ENCODE measurements at regions of chr12 and their contacts with region 1.

Region 1: GRCh38 chr12:53451661-53452158 is at the start of gene PCBP2:
- DNase-seq: peak; percentile 99
- H3K4me3 Mint-ChIP-seq: peak within 1 kb of the TSS; percentile 94
- H3K27ac Mint-ChIP-seq: peak within 1 kb of the TSS; percentile 98
- H3K4me1 Mint-ChIP-seq: peaks cover 23% of the 10 kb centered on the region
- H3K27me3 Mint-ChIP-seq: no peaks in the 10 kb centered on the region
- total RNA-seq, gene PCBP2: 897 to 926 TPM

Region 2: DNA sequence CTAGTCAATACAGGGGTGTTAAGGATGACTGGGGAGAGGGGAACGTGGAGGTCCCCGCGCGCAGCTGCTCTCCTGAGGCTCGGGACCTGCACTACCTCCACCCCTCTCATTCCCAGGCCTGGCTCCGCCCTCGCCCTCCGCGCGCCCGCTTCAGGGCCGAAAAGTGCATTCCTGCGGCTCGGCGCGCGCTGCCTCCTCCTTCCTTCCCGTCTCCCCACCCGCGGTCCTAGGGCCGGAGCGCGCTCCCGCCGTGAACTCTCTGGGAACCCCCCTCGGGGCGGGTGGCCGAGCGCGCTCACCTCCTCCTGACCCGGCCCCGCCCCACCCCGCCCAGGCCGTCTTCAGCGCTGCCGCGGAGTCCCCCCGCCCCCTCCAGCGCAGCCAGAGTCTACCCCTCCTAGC is 230.9 kb before region 1 on chr12:
- CTCF ChIA-PET with region 1: no interaction called
- POLR2A ChIA-PET with region 1: no interaction called
- intact Hi-C with region 1: loop called (anchors 5 kb)
- DNase-seq: peak; percentile 92
- H3K4me3 Mint-ChIP-seq: peak overlapping the region; percentile 80
- H3K27ac Mint-ChIP-seq: peak overlapping the region; percentile 93
- H3K4me1 Mint-ChIP-seq: peaks cover 74% of the 10 kb centered on the region
- H3K27me3 Mint-ChIP-seq: no peaks in the 10 kb centered on the region

Region 3: GRCh38 chr12:53379389-53380103 is 72.2 kb before region 1 on chr12:
- CTCF ChIA-PET with region 1: no interaction called
- POLR2A ChIA-PET with region 1: no interaction called
- intact Hi-C with region 1: loop called (anchors 2 kb)
- DNase-seq: peak; percentile 99
- H3K4me3 Mint-ChIP-seq: no peak overlapping the region
- H3K27ac Mint-ChIP-seq: no peak overlapping the region
- H3K4me1 Mint-ChIP-seq: peaks cover 36% of the 10 kb centered on the region
- H3K27me3 Mint-ChIP-seq: no peaks in the 10 kb centered on the region

Region 4: GRCh38 chr12:53476769-53477209 is 25.1 kb after region 1 on chr12:
- CTCF ChIA-PET with region 1: interaction called, 4 read pairs
- POLR2A ChIA-PET with region 1: interaction called, 53 read pairs
- intact Hi-C with region 1: loop called (anchors 2 kb)
- DNase-seq: no peak
- H3K4me3 Mint-ChIP-seq: no peak overlapping the region
- H3K27ac Mint-ChIP-seq: peak overlapping the region; percentile 94
- H3K4me1 Mint-ChIP-seq: peaks cover 60% of the 10 kb centered on the region
- H3K27me3 Mint-ChIP-seq: no peaks in the 10 kb centered on the region

Region 5: DNA sequence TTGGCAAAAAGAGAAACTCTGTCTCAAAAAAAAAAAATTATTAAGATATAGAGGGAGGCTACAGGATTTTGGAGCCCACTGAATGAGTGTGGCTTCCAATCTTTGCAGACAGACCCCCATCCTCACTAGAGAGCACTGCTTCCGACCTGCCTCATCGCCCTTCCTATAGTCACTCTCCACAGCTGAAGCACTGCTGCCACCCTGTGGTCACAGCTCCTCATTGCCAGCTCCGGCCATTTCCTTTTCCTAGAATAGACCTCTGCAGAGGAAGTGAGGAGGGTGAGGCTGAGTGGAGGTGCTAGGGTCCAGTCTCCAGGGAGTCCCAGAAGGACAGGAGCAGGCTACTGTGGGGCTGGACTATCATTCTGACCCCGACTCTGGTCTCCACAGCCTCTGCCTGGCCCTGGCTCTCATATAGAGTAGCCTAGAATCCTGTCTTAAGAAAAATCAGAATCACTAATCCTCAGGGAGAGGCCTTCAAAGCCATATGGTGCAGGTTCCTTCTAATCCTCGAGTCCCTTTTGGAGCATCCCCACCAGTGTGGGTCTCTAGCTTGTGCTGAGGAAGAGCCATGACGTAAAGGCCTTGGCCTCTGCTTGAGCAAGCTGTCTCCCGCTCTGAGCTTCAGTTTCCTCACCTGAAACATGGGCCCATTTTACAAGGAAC is 57.0 kb after region 1 on chr12:
- CTCF ChIA-PET with region 1: interaction called, 13 read pairs
- POLR2A ChIA-PET with region 1: no interaction called
- intact Hi-C with region 1: no loop called
- DNase-seq: peak; percentile 92
- H3K4me3 Mint-ChIP-seq: no peak overlapping the region
- H3K27ac Mint-ChIP-seq: peak overlapping the region; percentile 67
- H3K4me1 Mint-ChIP-seq: peaks cover 12% of the 10 kb centered on the region
- H3K27me3 Mint-ChIP-seq: no peaks in the 10 kb centered on the region

Measured in activated CD4-positive, alpha-beta memory T cell treated with anti-CD3 and anti-CD28 coated beads for 36 hours (primary cell).